Astrocyte of the cerebellum (primary cell): ENCODE measurements at regions of chr1 and their contacts with region 1.

Region 1: DNA sequence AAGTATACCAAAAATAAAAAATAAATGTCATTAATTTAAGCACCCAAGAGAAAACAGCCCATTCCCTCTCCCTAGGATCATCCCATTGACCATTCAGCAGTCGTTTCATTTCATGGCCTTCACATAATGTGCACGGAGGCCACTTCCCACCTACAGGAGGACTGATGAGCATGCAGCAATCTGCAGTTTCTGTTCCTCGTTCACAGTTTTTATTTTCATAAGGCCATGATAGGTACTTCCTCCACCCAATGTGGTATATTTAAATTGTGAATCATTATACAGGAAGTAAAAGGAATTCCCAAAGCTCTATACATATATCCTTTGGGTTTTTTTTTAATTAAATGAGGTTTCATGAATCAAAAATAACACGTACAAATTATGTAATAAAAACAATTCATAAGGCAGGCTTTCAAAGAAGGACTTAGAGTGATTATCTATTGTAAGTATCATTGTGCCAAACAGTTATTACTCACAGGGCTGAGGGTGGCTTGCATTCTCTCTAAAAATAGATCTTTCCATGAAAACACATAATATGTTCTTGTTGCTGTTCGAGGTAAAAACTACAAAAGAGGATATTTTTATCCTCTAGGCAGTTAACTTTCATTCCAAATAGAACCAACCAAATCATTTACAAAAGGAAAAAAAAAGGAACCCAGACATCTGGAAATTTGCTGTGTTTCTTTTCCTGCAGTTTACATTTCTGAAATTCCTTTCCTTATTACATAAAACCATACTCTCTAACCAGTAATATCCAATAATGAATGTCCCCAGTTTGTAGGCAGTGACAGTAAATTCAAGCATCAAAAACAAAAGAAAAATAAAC is 27.5 kb upstream of the SLC44A3 start:
- DNase-seq: peak; percentile 64
- H3K4me3 ChIP-seq: no peak overlapping the region
- CTCF ChIP-seq: peak; percentile 49

Region 2: DNA sequence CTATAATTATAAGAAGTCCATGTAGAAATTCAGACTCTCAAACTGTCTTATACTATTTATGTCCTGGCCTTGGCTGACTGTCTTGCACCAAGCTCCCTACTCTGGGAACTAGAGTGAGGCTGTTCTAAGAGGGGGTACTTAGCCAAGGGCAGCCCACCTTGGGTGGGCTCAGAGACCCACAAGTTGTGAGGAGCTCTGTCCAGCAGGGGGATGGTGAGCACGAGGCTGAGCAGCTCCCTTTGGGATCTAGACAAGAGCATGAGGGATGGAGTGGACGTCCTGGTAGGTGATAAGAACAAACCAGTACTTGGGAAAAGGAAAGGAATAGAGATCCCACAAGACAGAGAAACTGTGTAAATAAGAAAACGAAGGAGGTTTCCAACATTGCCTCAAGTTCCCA is 99.7 kb before region 1 on chr1:
- in situ Hi-C with region 1: no loop called
- DNase-seq: no peak
- H3K4me3 ChIP-seq: no peak overlapping the region
- CTCF ChIP-seq: no peak

Region 3: DNA sequence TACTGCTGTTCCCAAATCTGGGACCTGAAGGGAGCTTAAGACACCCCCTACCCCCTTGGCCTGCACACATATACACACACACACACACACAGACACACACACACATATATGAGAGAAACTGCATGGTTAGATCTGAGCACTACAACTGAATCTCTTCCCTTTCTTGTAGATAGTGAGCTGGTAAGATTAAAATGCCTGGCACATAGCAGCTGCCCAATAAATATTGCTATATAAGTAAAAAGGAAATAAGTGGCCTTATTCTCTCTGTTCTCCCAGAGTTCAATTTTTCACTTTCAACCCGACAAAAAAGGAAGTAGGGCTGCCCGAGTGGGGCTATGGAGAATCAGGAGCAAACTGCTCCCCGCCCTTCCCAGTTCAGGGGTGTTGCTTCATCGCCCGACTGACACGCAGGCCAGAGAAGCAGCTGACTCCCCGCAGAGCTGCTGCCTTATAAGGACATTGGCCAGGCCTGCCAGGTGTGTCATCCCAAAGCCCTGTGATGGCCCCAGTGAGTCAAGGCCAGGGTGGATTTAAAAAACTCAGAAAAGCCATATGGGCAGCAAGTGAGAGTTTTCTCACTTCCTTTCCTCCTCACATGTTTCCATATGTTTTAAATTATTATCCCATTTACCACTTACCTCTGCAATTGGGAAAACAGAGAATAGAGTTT is 79.1 kb before region 1 on chr1:
- in situ Hi-C with region 1: loop called (anchors 5 kb)
- DNase-seq: peak; percentile 68
- H3K4me3 ChIP-seq: no peak overlapping the region
- CTCF ChIP-seq: no peak

Region 4: GRCh38 chr1:94739521-94740061 is 53.1 kb before region 1 on chr1:
- in situ Hi-C with region 1: loop called (anchors 5 kb)
- DNase-seq: peak; percentile 95
- H3K4me3 ChIP-seq: no peak overlapping the region
- CTCF ChIP-seq: no peak

Region 5: GRCh38 chr1:94755675-94756074 is 37.0 kb before region 1 on chr1:
- in situ Hi-C with region 1: no loop called
- DNase-seq: peak; percentile 97
- H3K4me3 ChIP-seq: no peak overlapping the region
- CTCF ChIP-seq: no peak